Heart left ventricle (tissue), 16 donors: ENCODE measurements at regions of chr15 and their contacts with region 1.

Region 1: DNA sequence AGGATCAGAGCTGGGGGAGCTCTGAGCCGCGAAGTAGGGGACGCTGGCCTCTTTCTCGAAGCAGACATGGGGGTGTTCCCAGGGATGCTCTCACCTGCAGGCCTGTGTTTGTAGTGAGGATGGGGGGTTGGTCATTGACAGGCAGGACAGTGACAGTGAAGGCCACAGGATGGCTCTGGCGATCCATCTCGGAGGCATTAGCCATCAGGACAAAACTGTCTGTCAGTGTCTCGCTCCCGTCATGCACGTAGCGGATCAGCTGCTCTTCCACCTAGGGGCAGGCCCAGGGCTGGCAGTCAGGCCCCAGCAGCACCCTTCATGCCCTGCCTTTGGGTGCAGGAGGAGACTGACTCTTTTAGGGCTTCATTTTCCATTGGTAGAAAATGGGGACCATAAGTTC is 28.0 kb downstream of the CSPG4 start:
- DNase-seq: no peak
- ATAC-seq: no peak
- H3K4me3 ChIP-seq: no peak overlapping the region
- H3K27ac ChIP-seq: no peak overlapping the region
- H3K4me1 ChIP-seq: peaks cover 0 to 11% (median 5%) of the 10 kb centered on the region in 12 donors
- H3K27me3 ChIP-seq: no peaks in the 10 kb centered on the region
- CTCF ChIP-seq: no peak
- POLR2A ChIP-seq: no peak

Region 2: GRCh38 chr15:75508840-75509532 is 175.7 kb before region 1 on chr15:
- intact Hi-C with region 1: loop called in 2 of 10 experiments (anchors 5 to 10 kb)
- DNase-seq: no peak
- ATAC-seq: no peak
- H3K4me3 ChIP-seq: no peak overlapping the region
- H3K27ac ChIP-seq: no peak overlapping the region
- H3K4me1 ChIP-seq: peaks cover 0 to 3% (median 0%) of the 10 kb centered on the region in 12 donors
- H3K27me3 ChIP-seq: no peaks in the 10 kb centered on the region
- CTCF ChIP-seq: peak in 11 of 12 donors; percentile 28 to 66 (median 50)
- POLR2A ChIP-seq: no peak

Region 3: GRCh38 chr15:75639709-75640482 is 44.7 kb before region 1 on chr15 and contains the start of gene IMP3:
- intact Hi-C with region 1: loop called in 6 of 10 experiments (anchors 5 kb)
- DNase-seq: peak; percentile 95 to 97 (median 95)
- ATAC-seq: peak; percentile 98 to 99 (median 98)
- H3K4me3 ChIP-seq: peak within 1 kb of the TSS; percentile 71 to 99 (median 86)
- H3K27ac ChIP-seq: peak within 1 kb of the TSS; percentile 86 to 99 (median 94)
- H3K4me1 ChIP-seq: peaks cover 9 to 44% (median 30%) of the 10 kb centered on the region in 12 donors
- H3K27me3 ChIP-seq: no peaks in the 10 kb centered on the region
- CTCF ChIP-seq: peak in 1 of 12 donors; percentile 23
- POLR2A ChIP-seq: peak; percentile 82 to 97
- total RNA-seq, gene IMP3: 37.1 to 151 (median 44.5) TPM

Region 4: DNA sequence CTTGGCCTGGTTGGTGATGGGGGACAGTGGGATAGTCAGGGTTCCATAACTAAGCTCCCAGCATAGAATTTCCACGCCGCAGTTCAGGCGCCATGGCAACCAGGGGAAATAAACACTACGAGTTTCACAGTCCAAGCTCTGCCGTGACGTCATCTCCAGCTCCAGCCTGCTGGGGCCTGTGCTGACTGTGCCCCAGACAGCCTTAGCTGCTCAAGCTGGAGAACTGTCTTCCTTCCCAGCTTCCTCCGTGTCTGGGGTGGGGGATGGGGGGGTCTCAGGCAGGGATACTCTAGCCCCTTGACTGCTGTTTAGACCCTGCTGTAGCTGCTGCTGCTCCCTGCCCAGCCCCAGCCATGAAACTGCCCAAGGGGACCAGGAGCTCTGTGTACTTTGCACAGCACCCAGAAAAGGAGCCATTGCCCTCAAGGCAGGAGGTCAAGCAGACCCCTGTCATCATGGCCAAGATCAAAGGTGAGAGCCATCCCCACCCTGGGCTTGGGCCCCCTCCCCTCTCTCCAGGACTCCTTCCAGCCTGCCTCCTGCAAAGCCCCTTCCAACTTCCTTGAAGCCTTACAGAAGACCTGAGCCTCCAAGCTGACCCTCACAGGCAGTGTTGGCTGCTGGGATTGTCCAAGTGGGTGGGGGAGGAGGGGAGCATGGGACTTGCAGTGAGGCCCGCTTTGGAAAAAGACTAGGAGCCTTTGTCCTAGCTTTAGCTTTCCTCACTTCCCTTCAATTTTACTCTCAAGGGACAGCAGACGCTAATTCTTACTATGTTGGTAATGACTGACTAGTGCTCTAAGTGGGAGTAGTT is 39.4 kb after region 1 on chr15:
- intact Hi-C with region 1: loop called in 2 of 10 experiments (anchors 5 kb)
- DNase-seq: peak; percentile 88 to 95 (median 91)
- ATAC-seq: peak; percentile 75 to 92 (median 86)
- H3K4me3 ChIP-seq: no peak overlapping the region
- H3K27ac ChIP-seq: peak overlapping the region in 10 of 12 donors; percentile 28 to 85 (median 62)
- H3K4me1 ChIP-seq: peaks cover 0 to 21% (median 11%) of the 10 kb centered on the region in 12 donors
- H3K27me3 ChIP-seq: no peaks in the 10 kb centered on the region
- CTCF ChIP-seq: no peak
- POLR2A ChIP-seq: no peak

Region 5: GRCh38 chr15:75738647-75739331 is 54.1 kb after region 1 on chr15:
- intact Hi-C with region 1: loop called in 4 of 10 experiments (anchors 2 to 10 kb)
- DNase-seq: peak; percentile 92 to 96 (median 93)
- ATAC-seq: peak; percentile 92 to 99 (median 98)
- H3K4me3 ChIP-seq: peak overlapping the region; percentile 53 to 86 (median 77)
- H3K27ac ChIP-seq: peak overlapping the region in 4 of 12 donors; percentile 37 to 55 (median 50)
- H3K4me1 ChIP-seq: peaks cover 0 to 27% (median 12%) of the 10 kb centered on the region in 12 donors
- H3K27me3 ChIP-seq: no peaks in the 10 kb centered on the region
- CTCF ChIP-seq: peak in 1 of 12 donors; percentile 3
- POLR2A ChIP-seq: no peak